ENCODE measurements at regions of chr22 and their contacts with region 1.

Region 1: GRCh38 chr22:30423982-30424963 is 1.3 kb upstream of the MTFP1 start:
- DNase-seq: peak; percentile 99
- H3K4me3 Mint-ChIP-seq: peak overlapping the region; percentile 99
- H3K27ac Mint-ChIP-seq: peak overlapping the region; percentile 99
- H3K4me1 Mint-ChIP-seq: peaks cover 61% of the 10 kb centered on the region
- H3K27me3 Mint-ChIP-seq: no peaks in the 10 kb centered on the region

Region 2: DNA sequence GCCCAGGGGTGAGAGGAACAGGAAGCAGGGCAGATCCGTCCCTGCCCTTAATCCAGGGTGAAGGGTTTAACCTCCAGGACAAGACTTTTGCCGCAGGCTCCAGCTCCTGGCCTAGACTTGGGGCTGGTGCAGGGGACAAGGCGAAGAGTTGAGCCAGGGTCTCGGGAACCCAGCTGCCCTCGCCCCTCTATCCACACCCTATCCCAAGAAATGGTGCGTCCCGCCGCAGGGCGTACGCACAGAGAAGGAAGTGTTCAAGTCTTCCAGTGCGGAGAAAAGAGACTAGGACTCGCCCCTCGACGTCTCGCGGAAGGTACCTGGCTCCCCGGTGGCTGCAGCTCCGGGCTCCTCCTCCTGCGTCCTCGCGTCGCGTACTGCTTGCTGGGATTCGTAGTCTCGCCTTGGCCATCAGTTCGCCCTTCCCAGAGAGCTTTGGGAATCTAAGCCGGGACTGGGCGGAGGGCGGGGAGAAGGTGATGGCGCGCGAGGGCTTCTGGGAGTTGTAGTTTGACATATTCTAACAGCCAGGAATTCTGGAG is 657.6 kb before region 1 on chr22 and contains the start of gene ZMAT5:
- intact Hi-C with region 1: loop called (anchors 10 kb)
- DNase-seq: peak; percentile 98
- H3K4me3 Mint-ChIP-seq: peak within 1 kb of the TSS; percentile 94
- H3K27ac Mint-ChIP-seq: peak within 1 kb of the TSS; percentile 95
- H3K4me1 Mint-ChIP-seq: peaks cover 22% of the 10 kb centered on the region
- H3K27me3 Mint-ChIP-seq: no peaks in the 10 kb centered on the region
- total RNA-seq, gene ZMAT5: 24.9 and 26.1 TPM in 2 replicates

Region 3: GRCh38 chr22:30289134-30289979 is 134.9 kb before region 1 on chr22 and contains the start of gene CASTOR1:
- intact Hi-C with region 1: loop called (anchors 1 kb)
- DNase-seq: peak; percentile 98
- H3K4me3 Mint-ChIP-seq: peak within 1 kb of the TSS; percentile 86
- H3K27ac Mint-ChIP-seq: peak within 1 kb of the TSS; percentile 83
- H3K4me1 Mint-ChIP-seq: peaks cover 47% of the 10 kb centered on the region
- H3K27me3 Mint-ChIP-seq: no peaks in the 10 kb centered on the region
- total RNA-seq, gene CASTOR1: 4.7 and 7.3 TPM in 2 replicates

Region 4: DNA sequence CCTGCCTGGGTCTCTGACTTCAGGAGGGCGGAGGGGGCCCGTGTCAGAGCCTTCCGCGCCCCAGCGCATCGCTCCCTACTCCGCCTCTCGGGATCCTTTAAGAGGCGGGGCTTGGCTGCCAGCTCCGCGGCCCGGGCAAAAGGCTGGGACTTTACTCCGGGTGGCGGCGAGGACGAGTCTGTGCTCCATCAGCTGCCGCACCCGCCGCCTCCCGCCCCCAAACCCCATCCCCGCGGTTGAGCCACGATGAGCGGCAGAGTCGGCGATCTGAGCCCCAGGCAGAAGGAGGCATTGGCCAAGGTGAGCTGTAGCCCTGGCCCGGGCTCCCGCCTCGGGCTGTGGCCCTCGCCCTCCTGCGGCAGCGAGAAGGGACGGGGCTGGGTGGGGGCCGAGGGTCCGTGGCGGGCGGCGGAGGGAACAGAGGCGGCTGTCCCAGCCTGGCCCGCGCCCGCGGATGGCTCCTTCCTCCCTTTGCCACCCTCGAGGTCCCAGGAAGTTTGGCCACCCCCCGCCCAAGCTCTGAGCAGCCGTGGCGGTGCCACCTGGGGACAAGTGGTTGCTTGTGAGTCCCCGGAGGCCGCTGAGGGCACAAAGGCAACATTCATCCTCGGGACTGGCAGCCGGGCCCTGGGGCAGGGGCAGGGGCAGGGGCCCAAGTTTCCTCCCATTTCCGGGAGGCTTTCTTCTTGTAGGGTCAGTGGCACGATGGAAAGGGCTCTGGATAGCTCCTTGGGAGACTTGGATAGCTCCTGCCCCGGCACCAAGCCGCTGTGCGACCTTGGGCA is 27.2 kb before region 1 on chr22 and contains the start of gene SEC14L2:
- intact Hi-C with region 1: loop called (anchors 1 kb)
- DNase-seq: peak; percentile 90
- H3K4me3 Mint-ChIP-seq: peak within 1 kb of the TSS; percentile 94
- H3K27ac Mint-ChIP-seq: peak within 1 kb of the TSS; percentile 78
- H3K4me1 Mint-ChIP-seq: peaks cover 48% of the 10 kb centered on the region
- H3K27me3 Mint-ChIP-seq: no peaks in the 10 kb centered on the region
- total RNA-seq, gene SEC14L2: 25.1 and 26.7 TPM in 2 replicates

Region 5: DNA sequence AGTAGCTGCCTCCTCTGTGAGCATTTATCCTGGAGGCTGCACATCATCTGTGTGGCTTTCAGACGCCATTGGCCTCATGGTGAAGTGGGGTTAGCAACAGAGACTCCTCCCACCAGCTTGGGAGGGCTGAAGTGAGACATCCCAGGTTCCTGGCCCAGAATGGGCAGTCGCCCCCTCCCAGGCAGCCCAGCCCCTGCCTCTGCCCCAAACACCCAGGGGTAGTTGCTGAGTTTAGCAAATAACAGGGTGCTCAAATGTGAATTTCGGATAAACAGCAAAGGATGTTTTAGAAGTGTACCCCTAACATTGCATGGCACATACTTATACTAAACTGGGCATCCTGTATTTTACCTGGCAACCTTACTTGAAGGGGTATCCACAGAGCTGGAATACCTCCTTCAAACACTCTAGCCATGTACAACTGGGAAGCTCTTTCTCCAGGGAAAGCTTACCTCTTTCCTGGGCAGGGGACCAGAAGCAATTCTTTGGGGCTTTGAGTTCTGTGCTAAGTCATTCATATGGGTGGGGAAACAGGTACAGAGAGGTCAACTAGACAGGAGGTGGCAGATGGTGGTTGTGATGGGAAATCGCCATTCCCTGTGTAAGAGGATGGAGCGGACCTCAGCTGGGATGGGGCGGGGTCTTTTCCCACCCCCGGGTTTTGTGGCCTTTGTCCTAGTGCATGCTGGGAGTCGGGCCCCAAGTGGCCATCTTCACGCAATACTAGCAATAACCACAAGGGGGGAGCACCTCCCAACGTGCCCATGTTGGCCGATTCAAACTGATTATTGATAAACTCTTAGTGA is 20.6 kb after region 1 on chr22:
- intact Hi-C with region 1: loop called (anchors 2 kb)
- DNase-seq: peak; percentile 87
- H3K4me3 Mint-ChIP-seq: no peak overlapping the region
- H3K27ac Mint-ChIP-seq: no peak overlapping the region
- H3K4me1 Mint-ChIP-seq: peaks cover 23% of the 10 kb centered on the region
- H3K27me3 Mint-ChIP-seq: peaks cover 24% of the 10 kb centered on the region

Region 6: DNA sequence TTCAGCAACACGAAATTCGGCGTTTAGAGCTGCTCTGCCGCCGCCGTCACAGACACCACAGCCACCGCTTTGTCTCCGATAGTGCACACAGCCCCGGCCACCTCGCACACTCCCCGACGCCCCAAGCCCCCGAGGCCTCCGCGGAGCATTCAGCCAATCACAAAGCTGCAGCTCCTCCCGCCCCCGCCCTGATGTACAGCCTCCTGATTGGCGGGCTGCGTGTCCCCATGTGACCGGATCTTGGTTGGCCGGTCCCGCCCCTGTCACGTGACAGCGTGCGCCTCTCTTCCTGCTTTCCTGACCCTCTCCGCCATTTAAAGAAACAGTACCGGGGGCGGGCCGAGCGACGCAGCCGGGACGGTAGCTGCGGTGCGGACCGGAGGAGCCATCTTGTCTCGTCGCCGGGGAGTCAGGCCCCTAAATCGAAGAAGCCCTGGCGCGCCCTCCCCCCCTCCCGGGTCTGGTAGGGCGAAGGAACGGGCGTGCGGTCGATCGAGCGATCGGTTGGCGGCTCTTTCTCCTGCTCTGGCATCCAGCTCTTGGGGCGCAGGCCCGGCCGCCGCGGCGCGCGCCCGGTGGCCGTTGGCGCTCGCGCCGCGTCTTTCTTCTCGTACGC is 544.8 kb after region 1 on chr22 and contains the start of gene TUG1:
- intact Hi-C with region 1: loop called (anchors 5 kb)
- DNase-seq: peak; percentile 99
- H3K4me3 Mint-ChIP-seq: peak within 1 kb of the TSS; percentile 98
- H3K27ac Mint-ChIP-seq: peak within 1 kb of the TSS; percentile 99
- H3K4me1 Mint-ChIP-seq: peaks cover 39% of the 10 kb centered on the region
- H3K27me3 Mint-ChIP-seq: peaks cover 4% of the 10 kb centered on the region
- total RNA-seq, gene TUG1: 68.1 and 69.1 TPM in 2 replicates

Measured in activated CD4-positive, alpha-beta T cell treated with anti-CD3 and anti-CD28 coated beads, Interleukin-2, amount 10 ng/mL, durations not matched to agents 24 days and 14 days (primary cell).